Panc1 (cell line): ENCODE measurements at regions of chr2 and their contacts with region 1.

Region 1: DNA sequence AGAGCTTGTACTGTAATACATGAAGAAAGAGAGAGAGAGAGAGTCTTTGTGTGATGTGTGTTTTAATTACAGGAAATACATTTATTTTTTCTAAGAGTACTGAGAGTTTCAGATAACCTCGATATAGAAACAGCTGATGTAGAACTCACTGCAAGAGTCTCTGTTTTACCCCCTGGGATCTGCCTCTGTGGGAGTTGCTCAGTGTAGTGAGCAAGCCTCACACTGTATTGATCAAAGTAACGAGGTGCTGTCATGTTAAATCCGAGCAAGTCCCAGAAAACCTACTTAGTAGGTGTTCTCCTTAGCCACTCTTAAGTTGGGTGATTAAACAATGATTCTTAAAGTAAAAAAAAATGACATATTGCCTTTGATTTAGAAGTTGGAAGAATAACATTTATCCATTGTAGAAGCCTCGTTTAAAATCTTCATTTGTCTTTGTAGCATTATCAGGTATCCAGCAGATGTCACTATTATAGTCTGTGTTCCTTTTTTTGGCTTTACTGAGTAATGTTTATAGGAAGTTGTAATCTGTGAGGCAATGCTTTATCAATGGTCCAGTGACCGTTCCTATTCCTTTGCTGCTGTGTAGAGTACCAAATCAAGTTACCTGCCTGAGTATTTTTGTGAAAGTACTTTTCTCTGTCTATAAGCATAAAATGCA is 219.0 kb downstream of the MYO3B start:
- DNase-seq: no peak
- ATAC-seq: peak; percentile 69; the same call in 1 of the 2 replicates
- H3K4me3 ChIP-seq: no peak overlapping the region
- H3K27ac ChIP-seq: no peak overlapping the region
- H3K4me1 ChIP-seq: no peaks in the 10 kb centered on the region
- H3K27me3 ChIP-seq: peaks cover 12% of the 10 kb centered on the region
- CTCF ChIP-seq: peak; percentile 57; the same call in 1 of the 2 replicates

Region 2: GRCh38 chr2:170341684-170342623 is 55.0 kb before region 1 on chr2:
- CTCF ChIA-PET with region 1: no interaction called
- POLR2A ChIA-PET with region 1: no interaction called
- in situ Hi-C with region 1: no loop called
- intact Hi-C with region 1: no loop called
- DNase-seq: no peak
- ATAC-seq: no peak
- H3K4me3 ChIP-seq: no peak overlapping the region
- H3K27ac ChIP-seq: no peak overlapping the region
- H3K4me1 ChIP-seq: no peaks in the 10 kb centered on the region
- H3K27me3 ChIP-seq: peaks cover 4% of the 10 kb centered on the region; the same call in 1 of the 2 replicates
- CTCF ChIP-seq: no peak

Region 3: GRCh38 chr2:170434900-170435621 is 38.1 kb after region 1 on chr2:
- CTCF ChIA-PET with region 1: no interaction called
- POLR2A ChIA-PET with region 1: interaction called, 13 read pairs
- in situ Hi-C with region 1: no loop called
- intact Hi-C with region 1: no loop called
- DNase-seq: no peak
- ATAC-seq: no peak
- H3K4me3 ChIP-seq: no peak overlapping the region
- H3K27ac ChIP-seq: no peak overlapping the region
- H3K4me1 ChIP-seq: no peaks in the 10 kb centered on the region
- H3K27me3 ChIP-seq: no peaks in the 10 kb centered on the region
- CTCF ChIP-seq: no peak

Region 4: DNA sequence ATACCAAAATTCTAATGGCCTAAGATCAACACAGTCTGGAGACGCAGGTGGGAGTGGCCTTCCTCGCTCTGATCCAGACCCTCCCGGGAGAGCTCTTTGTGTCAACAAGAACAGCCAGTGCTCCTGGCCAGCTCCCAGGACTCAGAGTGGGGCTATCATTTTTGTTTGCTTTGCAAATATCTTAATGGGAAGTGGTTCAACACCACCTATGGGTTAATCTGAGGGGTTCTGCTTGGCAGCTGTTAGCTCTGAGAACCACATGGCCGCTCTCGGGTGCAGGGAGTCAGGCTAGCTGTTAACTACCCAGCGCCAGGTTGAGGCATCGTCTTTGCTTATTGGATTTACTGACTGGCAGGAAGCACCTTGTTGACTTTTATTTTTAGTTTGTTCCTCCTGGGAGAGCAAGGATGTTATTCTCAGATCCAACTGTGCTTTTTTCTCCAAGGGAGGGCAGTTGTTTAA is 133.4 kb after region 1 on chr2:
- CTCF ChIA-PET with region 1: no interaction called
- POLR2A ChIA-PET with region 1: interaction called, 11 read pairs
- in situ Hi-C with region 1: no loop called
- intact Hi-C with region 1: no loop called
- DNase-seq: no peak
- ATAC-seq: peak; percentile 48; the same call in 1 of the 2 replicates
- H3K4me3 ChIP-seq: no peak overlapping the region
- H3K27ac ChIP-seq: no peak overlapping the region
- H3K4me1 ChIP-seq: peaks cover 3% of the 10 kb centered on the region
- H3K27me3 ChIP-seq: peaks cover 8% of the 10 kb centered on the region; the same call in 1 of the 2 replicates
- CTCF ChIP-seq: no peak